ENCODE measurements at regions of chr1 and their contacts with region 1.

Region 1: DNA sequence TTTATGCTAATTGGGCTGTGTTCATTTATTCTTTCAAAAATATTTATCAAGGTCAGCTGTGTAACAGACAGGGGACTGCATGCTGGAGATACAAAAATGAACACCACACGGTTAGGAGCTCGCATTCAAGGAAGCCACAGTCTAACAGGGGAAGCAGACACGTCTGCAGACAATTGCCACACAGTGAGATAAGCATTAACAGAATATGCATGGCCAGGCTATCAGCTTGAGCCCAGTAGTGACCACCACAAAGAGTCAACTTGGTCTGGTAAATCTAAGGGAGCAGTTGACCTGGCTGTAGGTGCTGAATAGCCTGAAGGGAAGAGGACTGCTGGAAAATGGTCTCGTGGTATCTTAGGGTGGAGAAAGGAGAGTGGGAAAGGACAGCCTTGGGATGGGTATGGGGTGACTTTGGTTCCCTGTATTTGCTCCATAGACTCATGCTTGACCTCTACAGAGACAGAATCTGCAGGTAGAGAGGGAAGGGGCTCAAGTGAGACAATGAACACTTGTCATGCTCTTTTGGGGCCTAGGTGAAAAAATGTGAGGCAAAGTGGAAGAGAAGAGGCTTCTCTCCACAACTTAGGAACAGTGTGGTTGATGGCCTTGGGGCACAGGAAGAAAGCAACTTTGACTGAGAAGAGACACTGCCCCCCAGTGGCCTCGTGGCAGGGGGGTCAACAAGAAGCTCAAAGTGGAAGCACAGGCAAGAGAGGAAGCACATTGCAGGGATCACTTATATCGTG is 7.6 kb upstream of the NPL start:
- DNase-seq: peak; percentile 51 to 77 (median 70)
- H3K4me3 ChIP-seq: no peak overlapping the region
- H3K27ac ChIP-seq: no peak overlapping the region
- H3K4me1 ChIP-seq: peaks cover 5% of the 10 kb centered on the region
- H3K27me3 ChIP-seq: no peaks in the 10 kb centered on the region
- CTCF ChIP-seq: peak in 2 of 3 donors; percentile 29 to 46
- EP300 ChIP-seq: no peak
- POLR2A ChIP-seq: no peak

Region 2: DNA sequence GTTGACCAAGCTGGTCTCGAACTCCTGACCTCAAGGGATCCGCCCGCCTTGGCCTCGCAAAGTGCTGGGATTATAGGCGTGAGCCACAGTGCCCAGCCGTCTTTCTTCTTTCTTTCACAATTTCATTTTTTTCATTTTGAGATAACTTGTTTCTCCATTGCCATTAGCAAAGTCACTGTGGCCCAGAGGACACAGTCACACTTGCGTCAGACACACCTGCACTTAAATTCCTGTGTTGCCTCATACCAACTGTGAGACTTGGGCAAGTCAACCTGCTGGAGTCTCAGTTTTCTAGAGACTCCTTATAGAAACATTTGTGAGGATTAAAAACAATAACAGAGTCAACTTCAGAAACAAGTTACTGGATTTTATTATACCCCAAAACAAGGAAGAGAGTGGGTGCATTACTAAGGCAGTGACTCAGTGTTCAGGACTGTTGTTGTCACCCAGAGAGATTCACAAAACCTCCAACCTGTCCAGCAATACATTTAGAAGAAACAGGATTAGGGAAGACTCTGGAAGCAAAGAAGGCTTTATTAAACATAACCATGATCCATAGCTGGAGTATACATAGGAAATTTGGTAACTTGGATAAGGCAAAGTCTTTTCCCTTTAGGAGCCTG is 384.1 kb before region 1 on chr1:
- intact Hi-C with region 1: loop called in 1 of 4 experiments (anchors 5 kb)
- DNase-seq: no peak
- H3K4me3 ChIP-seq: no peak overlapping the region
- H3K27ac ChIP-seq: peak overlapping the region in 1 of 2 donors; percentile 70
- H3K4me1 ChIP-seq: peaks cover 4% of the 10 kb centered on the region
- H3K27me3 ChIP-seq: no peaks in the 10 kb centered on the region
- CTCF ChIP-seq: no peak
- EP300 ChIP-seq: no peak
- POLR2A ChIP-seq: no peak

Region 3: GRCh38 chr1:182484067-182484466 is 297.9 kb before region 1 on chr1:
- intact Hi-C with region 1: no loop called
- DNase-seq: no peak
- H3K4me3 ChIP-seq: no peak overlapping the region
- H3K27ac ChIP-seq: no peak overlapping the region
- H3K4me1 ChIP-seq: no peaks in the 10 kb centered on the region
- H3K27me3 ChIP-seq: no peaks in the 10 kb centered on the region
- CTCF ChIP-seq: no peak
- EP300 ChIP-seq: no peak
- POLR2A ChIP-seq: no peak

Region 4: DNA sequence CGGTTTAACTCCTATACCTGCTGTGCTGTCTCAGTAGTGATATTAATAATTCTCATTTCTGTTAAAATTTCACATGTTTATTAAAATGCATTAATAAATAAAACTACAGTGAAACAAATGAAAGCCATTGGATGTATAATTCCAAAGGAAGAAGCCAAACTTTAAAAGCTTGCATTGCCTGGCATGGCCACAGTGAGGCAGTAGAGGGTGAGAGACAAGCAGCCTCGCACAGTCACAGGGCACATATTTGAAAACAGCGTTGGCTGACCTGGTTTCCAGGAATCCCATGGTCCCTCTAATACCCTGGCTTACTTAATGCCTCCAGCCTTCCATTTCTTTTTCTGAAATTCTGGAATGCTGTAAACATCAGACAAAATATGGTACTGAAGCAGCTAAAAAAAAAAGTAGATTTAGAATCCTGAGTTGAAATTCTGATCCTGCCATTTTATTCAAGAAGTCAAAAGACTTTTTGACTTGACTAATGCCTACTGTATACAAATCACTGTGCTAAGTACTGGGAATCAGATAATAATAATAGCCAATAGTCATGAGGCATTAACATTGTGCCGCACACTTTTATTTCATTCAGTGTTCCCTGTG is 186.3 kb before region 1 on chr1:
- intact Hi-C with region 1: loop called (anchors 1 to 2 kb)
- DNase-seq: peak; percentile 32 to 79 (median 66)
- H3K4me3 ChIP-seq: no peak overlapping the region
- H3K27ac ChIP-seq: no peak overlapping the region
- H3K4me1 ChIP-seq: no peaks in the 10 kb centered on the region
- H3K27me3 ChIP-seq: no peaks in the 10 kb centered on the region
- CTCF ChIP-seq: peak; percentile 43 to 77 (median 52)
- EP300 ChIP-seq: no peak
- POLR2A ChIP-seq: no peak

Region 5: GRCh38 chr1:182604169-182605164 is 177.5 kb before region 1 on chr1 and contains the start of gene RGS16:
- intact Hi-C with region 1: loop called (anchors 1 to 2 kb)
- DNase-seq: peak; percentile 90 to 95 (median 93)
- H3K4me3 ChIP-seq: peak within 1 kb of the TSS; percentile 49
- H3K27ac ChIP-seq: peak within 1 kb of the TSS in 1 of 2 donors; percentile 32
- H3K4me1 ChIP-seq: peaks cover 6% of the 10 kb centered on the region
- H3K27me3 ChIP-seq: no peaks in the 10 kb centered on the region
- CTCF ChIP-seq: peak in 1 of 3 donors; percentile 7
- EP300 ChIP-seq: no peak
- POLR2A ChIP-seq: peak; percentile 59
- total RNA-seq, gene RGS16: 1.1 to 7.4 (median 2.5) TPM

Region 6: DNA sequence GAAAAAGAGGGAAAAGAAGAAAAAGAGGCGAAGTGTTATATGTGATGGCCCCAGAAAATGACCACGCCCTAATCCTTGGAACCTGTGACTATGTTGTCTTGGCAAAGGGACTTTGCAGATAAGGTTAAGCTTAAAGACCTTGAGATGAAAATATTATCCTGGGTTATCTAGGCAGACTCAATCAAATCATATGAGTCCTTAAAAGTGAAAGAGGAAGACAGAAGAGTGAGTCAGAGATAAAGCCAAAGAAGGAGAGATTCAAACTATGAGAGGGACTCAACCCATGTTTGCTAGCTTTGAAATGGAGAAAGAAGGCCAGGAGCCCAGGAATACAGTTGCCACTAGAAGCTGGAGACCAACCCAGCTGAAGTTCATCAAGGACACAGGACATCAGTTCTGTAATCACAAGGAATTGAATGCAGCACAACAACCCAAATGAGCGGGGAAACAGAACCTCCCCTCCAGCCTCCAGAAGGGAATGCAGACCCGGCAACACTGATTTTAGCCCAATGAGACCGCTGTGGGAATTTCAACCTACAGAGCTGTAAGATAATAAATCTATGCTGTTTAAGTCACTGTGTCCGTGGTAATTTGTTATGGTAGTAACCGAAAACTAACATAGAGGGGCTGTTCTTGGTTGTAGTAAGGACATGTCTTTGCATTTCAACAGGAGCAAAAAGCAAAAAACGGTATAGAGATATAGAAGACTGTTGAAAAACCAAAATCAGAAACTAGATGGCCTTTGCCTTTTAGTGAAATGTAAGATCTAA is 93.4 kb before region 1 on chr1:
- intact Hi-C with region 1: no loop called
- DNase-seq: no peak
- H3K4me3 ChIP-seq: no peak overlapping the region
- H3K27ac ChIP-seq: no peak overlapping the region
- H3K4me1 ChIP-seq: peaks cover 2% of the 10 kb centered on the region
- H3K27me3 ChIP-seq: no peaks in the 10 kb centered on the region
- CTCF ChIP-seq: no peak
- EP300 ChIP-seq: no peak
- POLR2A ChIP-seq: no peak

Region 7: GRCh38 chr1:183148599-183148998 is 366.6 kb after region 1 on chr1:
- intact Hi-C with region 1: no loop called
- DNase-seq: no peak
- H3K4me3 ChIP-seq: no peak overlapping the region
- H3K27ac ChIP-seq: no peak overlapping the region
- H3K4me1 ChIP-seq: peaks cover 4% of the 10 kb centered on the region
- H3K27me3 ChIP-seq: no peaks in the 10 kb centered on the region
- CTCF ChIP-seq: no peak
- EP300 ChIP-seq: no peak
- POLR2A ChIP-seq: no peak